Natural killer cell (primary cell): ENCODE measurements at regions of chr5 and their contacts with region 1.

Region 1: GRCh38 chr5:80793354-80793753 is 138.6 kb upstream of the DHFR start:
- DNase-seq: no peak
- ATAC-seq: no peak
- H3K4me3 ChIP-seq: no peak overlapping the region
- H3K4me3 Mint-ChIP-seq: no peak overlapping the region
- H3K27ac ChIP-seq: no peak overlapping the region
- H3K27ac Mint-ChIP-seq: no peak overlapping the region
- H3K4me1 ChIP-seq: no peaks in the 10 kb centered on the region
- H3K4me1 Mint-ChIP-seq: no peaks in the 10 kb centered on the region
- H3K27me3 ChIP-seq: no peaks in the 10 kb centered on the region
- H3K27me3 Mint-ChIP-seq: no peaks in the 10 kb centered on the region
- CTCF ChIP-seq: no peak

Region 2: GRCh38 chr5:80863708-80864107 is 70.4 kb after region 1 on chr5:
- intact Hi-C with region 1: loop called (anchors 2 kb)
- DNase-seq: no peak
- ATAC-seq: no peak
- H3K4me3 ChIP-seq: no peak overlapping the region
- H3K4me3 Mint-ChIP-seq: no peak overlapping the region
- H3K27ac ChIP-seq: no peak overlapping the region
- H3K27ac Mint-ChIP-seq: no peak overlapping the region
- H3K4me1 ChIP-seq: no peaks in the 10 kb centered on the region
- H3K4me1 Mint-ChIP-seq: peaks cover 10 to 11% of the 10 kb centered on the region in 2 donors
- H3K27me3 ChIP-seq: no peaks in the 10 kb centered on the region
- H3K27me3 Mint-ChIP-seq: no peaks in the 10 kb centered on the region
- CTCF ChIP-seq: no peak